ENCODE measurements at regions of chr11 and their contacts with region 1.

Region 1: GRCh38 chr11:45846974-45847910 is at the start of gene CRY2:
- DNase-seq: peak; percentile 99 to 100
- H3K4me3 ChIP-seq: peak within 1 kb of the TSS; percentile 88 to 98
- H3K27ac ChIP-seq: peak within 1 kb of the TSS; percentile 84
- H3K4me1 ChIP-seq: peaks cover 51% of the 10 kb centered on the region
- H3K27me3 ChIP-seq: no peaks in the 10 kb centered on the region
- CTCF ChIP-seq: no peak
- POLR2A ChIP-seq: peak in 1 of 2 donors; percentile 95
- total RNA-seq, gene CRY2: 54.3 TPM

Region 2: GRCh38 chr11:45405916-45406670 is 441.1 kb before region 1 on chr11:
- intact Hi-C with region 1: no loop called
- DNase-seq: no peak
- H3K4me3 ChIP-seq: no peak overlapping the region
- H3K27ac ChIP-seq: no peak overlapping the region
- H3K4me1 ChIP-seq: no peaks in the 10 kb centered on the region
- H3K27me3 ChIP-seq: no peaks in the 10 kb centered on the region
- CTCF ChIP-seq: no peak
- POLR2A ChIP-seq: no peak

Region 3: DNA sequence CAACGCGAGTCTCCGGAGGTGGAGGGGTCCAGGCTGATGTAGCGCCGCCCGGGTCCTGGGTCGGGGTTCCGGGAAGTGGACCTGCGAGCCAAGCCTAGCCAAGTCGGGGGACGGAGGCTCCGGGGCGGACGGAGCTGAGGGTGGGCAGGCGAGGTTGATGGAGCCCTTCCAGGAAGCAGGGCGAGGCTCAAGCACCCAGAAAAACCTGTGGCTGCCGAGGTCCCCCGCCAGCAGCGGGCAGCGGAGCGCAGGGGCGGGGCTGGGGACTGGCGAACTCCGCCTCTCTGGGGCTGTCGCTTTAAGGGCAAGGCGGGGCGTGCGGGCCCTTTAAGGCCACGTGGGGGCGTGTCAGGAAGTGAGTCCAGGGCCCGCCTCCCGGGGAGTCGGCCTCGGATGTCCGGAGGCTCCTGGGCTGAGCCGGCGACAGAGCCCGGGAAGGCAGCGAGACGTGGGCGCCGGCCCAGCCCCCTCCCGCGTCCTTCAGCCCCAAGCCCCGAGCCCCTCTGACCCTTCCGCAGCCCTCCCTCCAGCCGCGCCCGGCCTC is 42.4 kb before region 1 on chr11 and contains the start of gene SLC35C1:
- intact Hi-C with region 1: loop called (anchors 2 kb)
- DNase-seq: peak in 1 of 2 donors; percentile 96
- H3K4me3 ChIP-seq: peak within 1 kb of the TSS; percentile 91 to 97
- H3K27ac ChIP-seq: peak within 1 kb of the TSS; percentile 94
- H3K4me1 ChIP-seq: peaks cover 48% of the 10 kb centered on the region
- H3K27me3 ChIP-seq: no peaks in the 10 kb centered on the region
- CTCF ChIP-seq: peak in 2 of 3 experiments; percentile 9 to 13
- POLR2A ChIP-seq: peak in 1 of 2 donors; percentile 83
- total RNA-seq, gene SLC35C1: 16.7 TPM